Posterior cingulate gyrus (tissue), 11 donors: ENCODE measurements at regions of chr15 and their contacts with region 1.

Region 1: DNA sequence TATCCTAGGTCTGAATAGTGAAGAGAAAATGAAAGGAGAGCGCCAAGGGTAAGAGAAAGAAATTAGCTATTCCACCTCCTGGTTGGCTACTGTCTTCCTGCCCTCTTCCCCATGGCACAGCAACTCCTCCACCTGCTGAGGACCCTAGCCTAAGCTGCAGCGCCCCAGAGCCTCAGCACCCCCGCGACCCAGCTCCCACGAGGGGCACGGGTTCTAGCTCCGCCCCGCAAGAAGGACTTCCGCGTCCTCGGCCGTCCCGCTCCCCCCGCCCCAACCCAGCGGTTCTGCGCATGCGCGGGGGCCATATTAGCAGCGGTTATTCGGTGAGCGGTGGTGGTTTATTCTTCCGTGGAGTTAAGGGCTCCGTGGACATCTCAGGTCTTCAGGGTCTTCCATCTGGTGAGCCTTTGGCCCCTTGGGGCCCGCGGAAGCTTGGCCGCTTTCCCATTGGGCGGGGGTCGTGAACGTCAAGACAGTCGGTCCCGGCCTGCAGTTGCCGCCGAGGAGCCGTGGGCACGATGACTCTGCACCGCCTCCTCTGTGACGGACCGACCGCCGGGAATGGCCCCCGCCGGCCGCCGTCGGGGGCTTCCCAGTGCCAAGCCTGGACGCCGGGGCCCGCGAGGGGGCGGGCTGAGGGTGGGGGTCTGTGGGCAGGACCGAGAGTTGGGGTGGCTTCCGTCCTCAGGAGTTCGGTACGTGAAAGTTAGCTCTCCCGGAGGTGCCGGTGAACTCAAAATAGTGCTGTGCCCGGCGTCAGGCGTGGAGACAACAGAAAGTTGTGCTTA is at the start of gene PSMA4:
- DNase-seq: peak; percentile 86 to 99 (median 92)

Region 2: GRCh38 chr15:78437762-78438302 is 102.5 kb before region 1 on chr15 and contains the start of gene IREB2:
- intact Hi-C with region 1: loop called (anchors 2 kb)
- DNase-seq: peak; percentile 94 to 100 (median 96)

Region 3: GRCh38 chr15:78506971-78507830 is 33.1 kb before region 1 on chr15 and contains the start of gene HYKK:
- intact Hi-C with region 1: loop called (anchors 2 kb)
- DNase-seq: peak; percentile 66 to 99 (median 88)